ENCODE measurements at regions of chr14 and their contacts with region 1.

Region 1: GRCh38 chr14:21103710-21104447 is 3.0 kb downstream of the TMEM253 start:
- DNase-seq: peak; percentile 97
- H3K4me3 Mint-ChIP-seq: peak overlapping the region; percentile 90
- H3K27ac Mint-ChIP-seq: peak overlapping the region; percentile 81
- H3K4me1 Mint-ChIP-seq: peaks cover 39% of the 10 kb centered on the region
- H3K27me3 Mint-ChIP-seq: peaks cover 32% of the 10 kb centered on the region

Region 2: GRCh38 chr14:21023817-21024584 is 79.9 kb before region 1 on chr14:
- CTCF ChIA-PET with region 1: interaction called, 208 read pairs
- DNase-seq: peak; percentile 25
- H3K4me3 Mint-ChIP-seq: peak overlapping the region; percentile 75
- H3K27ac Mint-ChIP-seq: no peak overlapping the region
- H3K4me1 Mint-ChIP-seq: peaks cover 13% of the 10 kb centered on the region
- H3K27me3 Mint-ChIP-seq: peaks cover 62% of the 10 kb centered on the region

Region 3: DNA sequence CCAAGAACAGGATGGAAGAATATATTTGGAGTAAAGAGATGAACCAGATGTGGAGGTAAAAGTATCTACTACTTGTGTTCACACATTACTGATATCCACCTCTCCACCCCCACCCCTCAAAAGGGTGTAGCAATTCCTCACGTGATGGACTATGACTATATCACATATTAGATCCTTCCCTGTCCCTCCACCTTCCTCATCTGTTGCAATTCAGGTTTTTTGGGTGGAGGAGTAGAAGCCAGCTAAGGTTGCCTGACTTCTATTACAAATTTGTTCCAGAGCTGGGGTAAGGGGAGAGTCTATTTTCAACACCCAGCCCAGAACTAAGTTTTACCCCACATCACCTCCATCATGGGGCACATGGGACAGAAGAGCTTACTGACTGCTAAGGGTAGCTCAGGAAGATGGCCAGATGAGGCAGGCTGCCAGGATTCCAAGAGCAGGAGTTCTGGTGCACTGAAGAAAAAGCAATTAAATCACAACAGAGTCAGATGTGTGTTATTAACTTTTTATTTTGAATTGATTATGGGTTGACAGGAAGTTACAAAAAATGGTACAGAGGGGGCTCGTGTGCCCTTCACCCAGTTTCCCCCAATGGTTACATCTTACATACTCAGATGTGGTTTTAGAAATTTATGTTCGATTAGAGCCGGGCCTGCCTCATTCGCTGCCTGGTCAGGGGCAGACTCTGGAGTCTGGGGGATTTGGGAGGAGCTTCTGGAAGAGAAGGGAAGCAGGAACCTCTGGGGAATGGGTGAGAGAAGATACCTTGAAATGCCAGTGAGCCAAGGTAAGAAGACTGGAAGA is 71.3 kb before region 1 on chr14:
- CTCF ChIA-PET with region 1: interaction called, 13 read pairs
- DNase-seq: no peak
- H3K4me3 Mint-ChIP-seq: no peak overlapping the region
- H3K27ac Mint-ChIP-seq: no peak overlapping the region
- H3K4me1 Mint-ChIP-seq: no peaks in the 10 kb centered on the region
- H3K27me3 Mint-ChIP-seq: peaks cover 47% of the 10 kb centered on the region

Region 4: DNA sequence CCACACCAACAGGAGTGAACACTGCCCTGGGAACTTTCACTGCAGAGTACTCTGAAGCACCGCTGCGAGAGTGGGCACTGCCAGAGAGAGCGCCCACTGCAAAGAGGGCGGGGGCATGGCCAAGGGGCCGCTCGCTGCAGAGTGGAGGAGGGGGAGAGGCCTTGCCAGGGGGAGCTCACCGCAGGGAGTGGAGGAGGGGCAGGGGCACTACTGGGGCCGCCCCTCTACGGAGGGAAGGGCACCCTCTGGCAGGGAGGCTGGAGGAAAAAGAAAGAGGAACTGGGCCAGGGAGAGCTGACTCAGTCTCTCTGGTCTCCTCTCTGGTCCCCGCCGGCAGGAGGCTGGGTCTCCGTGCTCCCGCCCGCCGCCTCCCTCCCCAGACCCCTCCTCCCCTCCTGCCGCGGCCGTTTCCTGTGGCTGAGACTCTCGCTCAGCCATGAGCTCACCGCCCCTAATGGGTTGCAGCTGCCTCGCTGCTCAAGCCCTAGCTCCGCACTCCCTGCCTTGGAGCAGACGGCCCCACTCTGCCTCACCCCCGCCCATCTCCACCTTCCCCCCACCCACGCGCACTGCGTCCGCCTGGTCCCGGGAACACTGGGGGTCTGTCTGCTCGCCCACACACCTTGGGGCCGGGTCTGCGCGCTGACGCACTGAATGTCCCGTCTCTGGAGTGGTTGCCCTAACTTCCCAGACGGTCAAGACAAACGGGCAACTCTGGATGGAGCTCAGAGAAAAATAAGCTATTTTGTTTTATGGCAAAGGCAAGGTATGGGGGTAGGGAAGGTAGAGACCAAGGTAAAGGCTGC is 32.5 kb before region 1 on chr14:
- CTCF ChIA-PET with region 1: interaction called, 69 read pairs
- DNase-seq: peak; percentile 62
- H3K4me3 Mint-ChIP-seq: peak overlapping the region; percentile 42
- H3K27ac Mint-ChIP-seq: no peak overlapping the region
- H3K4me1 Mint-ChIP-seq: peaks cover 34% of the 10 kb centered on the region
- H3K27me3 Mint-ChIP-seq: peaks cover 93% of the 10 kb centered on the region

Region 5: DNA sequence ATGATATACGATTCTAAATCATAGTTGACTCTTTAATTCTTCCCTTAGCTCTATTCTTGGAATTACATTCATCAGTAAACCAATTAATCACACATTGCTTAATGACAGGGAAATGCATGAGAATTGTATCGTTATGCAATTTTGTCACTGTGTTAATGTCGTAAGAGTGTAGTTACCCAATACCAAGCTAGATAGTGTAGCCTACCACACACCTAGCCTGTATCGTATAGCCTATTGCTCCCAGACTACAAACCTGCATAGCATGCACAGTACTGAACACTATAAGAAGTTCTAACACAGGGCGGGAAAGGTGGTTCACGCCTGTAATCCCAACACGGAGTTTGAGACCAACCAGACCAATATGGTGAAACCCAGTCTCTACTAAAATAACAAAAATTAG is 140.7 kb after region 1 on chr14:
- CTCF ChIA-PET with region 1: no interaction called
- DNase-seq: no peak
- H3K4me3 Mint-ChIP-seq: no peak overlapping the region
- H3K27ac Mint-ChIP-seq: no peak overlapping the region
- H3K4me1 Mint-ChIP-seq: peaks cover 41% of the 10 kb centered on the region
- H3K27me3 Mint-ChIP-seq: no peaks in the 10 kb centered on the region

Measured in activated naive CD4-positive, alpha-beta T cell treated with anti-CD3 and anti-CD28 coated beads, Interleukin-2, amount 10 ng/mL, durations not matched to agents 7 days and 5 days (primary cell).